ENCODE measurements at regions of chr19 and their contacts with region 1.

Region 1: GRCh38 chr19:36378625-36379509 is at the start of gene ZFP14:
- DNase-seq: peak; percentile 91 to 97
- ATAC-seq: peak; percentile 98
- H3K4me3 ChIP-seq: peak within 1 kb of the TSS; percentile 81
- H3K4me3 Mint-ChIP-seq: peak within 1 kb of the TSS; percentile 88
- H3K27ac ChIP-seq: peak within 1 kb of the TSS; percentile 89
- H3K27ac Mint-ChIP-seq: peak within 1 kb of the TSS; percentile 89 to 98
- H3K4me1 ChIP-seq: peaks cover 10% of the 10 kb centered on the region
- H3K4me1 Mint-ChIP-seq: peaks cover 18 to 23% of the 10 kb centered on the region in 2 donors
- H3K27me3 ChIP-seq: no peaks in the 10 kb centered on the region
- H3K27me3 Mint-ChIP-seq: no peaks in the 10 kb centered on the region
- CTCF ChIP-seq: no peak
- total RNA-seq, gene ZFP14: 7.4 to 8.2 (median 7.8) TPM

Region 2: DNA sequence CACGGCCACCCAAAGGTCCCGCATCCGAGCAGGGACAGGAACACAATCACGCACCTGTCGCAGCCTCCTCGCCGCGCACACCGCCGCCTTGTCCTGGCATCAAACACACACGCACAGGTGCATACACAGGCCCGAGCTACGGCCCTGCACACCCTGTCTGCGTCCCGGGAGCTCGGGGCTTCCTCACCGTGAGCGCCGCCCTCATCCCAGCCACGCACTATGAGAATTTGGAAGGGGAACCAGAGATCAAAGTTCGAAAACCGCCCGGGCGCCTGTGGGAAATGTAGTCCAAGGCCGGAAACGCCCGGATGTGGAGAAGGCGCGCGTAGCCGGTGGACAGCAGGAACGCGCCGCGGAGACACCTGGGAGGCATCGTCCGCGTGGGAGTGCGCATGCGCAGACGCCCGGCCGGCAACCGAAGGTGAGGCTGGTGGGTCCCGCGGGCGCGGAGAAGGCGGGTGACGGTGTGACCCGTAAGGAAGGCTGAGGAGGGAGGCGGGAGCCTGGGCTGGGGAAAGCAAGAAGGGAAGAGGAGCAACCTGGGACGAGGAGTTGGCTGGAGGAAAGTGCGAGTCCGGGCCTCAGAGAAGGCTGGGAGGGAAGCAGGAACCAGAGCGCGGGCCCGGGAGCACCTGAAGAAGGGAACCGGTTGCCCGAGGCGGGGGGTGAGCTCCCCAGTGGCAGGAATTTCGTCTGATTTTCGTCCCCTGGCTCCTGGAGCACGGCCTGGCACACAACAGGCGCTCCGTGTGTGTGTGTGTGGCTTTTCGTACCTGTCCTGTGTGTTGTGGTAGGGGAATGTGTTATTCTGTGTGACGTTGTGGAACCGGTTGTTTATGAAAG is 308.6 kb after region 1 on chr19 and contains the start of gene ZNF567:
- intact Hi-C with region 1: loop called (anchors 10 kb)
- DNase-seq: peak; percentile 92 to 98
- ATAC-seq: peak; percentile 91 to 96 (median 95)
- H3K4me3 ChIP-seq: peak within 1 kb of the TSS; percentile 90
- H3K4me3 Mint-ChIP-seq: peak within 1 kb of the TSS; percentile 98
- H3K27ac ChIP-seq: peak within 1 kb of the TSS; percentile 80
- H3K27ac Mint-ChIP-seq: peak within 1 kb of the TSS; percentile 93 to 99
- H3K4me1 ChIP-seq: peaks cover 18% of the 10 kb centered on the region
- H3K4me1 Mint-ChIP-seq: peaks cover 28 to 39% of the 10 kb centered on the region in 2 donors
- H3K27me3 ChIP-seq: no peaks in the 10 kb centered on the region
- H3K27me3 Mint-ChIP-seq: no peaks in the 10 kb centered on the region
- CTCF ChIP-seq: no peak
- total RNA-seq, gene ZNF567: 5.6 to 11.8 (median 10.5) TPM

Region 3: GRCh38 chr19:36850559-36851442 is 471.9 kb after region 1 on chr19 and contains the start of gene ZNF345:
- intact Hi-C with region 1: loop called (anchors 1 kb)
- DNase-seq: peak; percentile 73 to 94
- ATAC-seq: peak; percentile 79 to 94 (median 85)
- H3K4me3 ChIP-seq: peak within 1 kb of the TSS; percentile 62
- H3K4me3 Mint-ChIP-seq: no peak within 1 kb of the TSS
- H3K27ac ChIP-seq: peak within 1 kb of the TSS; percentile 85
- H3K27ac Mint-ChIP-seq: no peak within 1 kb of the TSS
- H3K4me1 ChIP-seq: peaks cover 23% of the 10 kb centered on the region
- H3K4me1 Mint-ChIP-seq: peaks cover 0 to 10% of the 10 kb centered on the region in 2 donors
- H3K27me3 ChIP-seq: no peaks in the 10 kb centered on the region
- H3K27me3 Mint-ChIP-seq: no peaks in the 10 kb centered on the region
- CTCF ChIP-seq: no peak
- total RNA-seq, gene ZNF345: 7.1 to 19.5 (median 10.0) TPM

Region 4: DNA sequence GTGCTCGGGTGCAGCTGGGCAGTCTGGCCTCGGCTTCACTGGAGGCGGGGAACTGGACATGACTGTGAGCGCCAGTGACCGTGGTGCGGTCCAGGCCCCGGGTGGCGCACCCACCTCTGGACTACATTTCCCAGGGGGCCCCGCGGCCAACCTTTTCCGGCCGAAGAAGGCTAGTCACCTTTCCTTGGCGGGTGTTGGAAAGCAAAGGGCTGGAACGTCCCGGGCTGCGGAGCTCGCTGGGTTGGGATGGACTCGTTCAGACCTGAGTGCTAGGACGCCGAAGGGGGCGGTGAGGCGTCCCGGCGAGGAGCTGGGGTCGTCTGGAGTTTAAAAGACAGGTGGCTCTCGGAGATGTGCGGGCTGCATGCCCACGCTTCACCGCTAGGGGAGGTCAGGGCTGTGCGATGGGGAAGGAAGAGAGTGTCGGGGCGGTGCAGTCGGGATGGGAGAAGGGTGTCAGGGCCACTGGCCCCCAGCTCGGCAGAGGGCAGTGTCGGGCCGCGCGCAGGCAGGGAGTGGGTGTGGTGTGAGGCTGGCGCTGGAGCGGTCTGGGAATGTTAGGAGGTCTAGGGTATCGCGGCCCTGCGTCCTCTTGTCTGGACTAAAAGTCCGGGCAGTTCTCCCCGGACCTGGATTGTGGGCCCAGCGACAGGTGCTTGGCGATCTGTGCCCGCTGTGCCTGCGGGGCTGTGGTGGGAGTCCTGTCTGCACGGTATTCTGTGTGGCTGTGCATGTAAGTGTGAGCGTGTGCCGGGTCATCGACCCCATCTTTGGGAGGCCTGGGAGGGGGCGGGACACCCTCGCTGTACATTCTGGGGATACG is 594.4 kb after region 1 on chr19:
- intact Hi-C with region 1: loop called (anchors 2 kb)
- DNase-seq: peak; percentile 63 to 91
- ATAC-seq: peak; percentile 88 to 89 (median 89)
- H3K4me3 ChIP-seq: peak overlapping the region; percentile 76
- H3K4me3 Mint-ChIP-seq: peak overlapping the region; percentile 100
- H3K27ac ChIP-seq: peak overlapping the region; percentile 59
- H3K27ac Mint-ChIP-seq: peak overlapping the region; percentile 95 to 99
- H3K4me1 ChIP-seq: peaks cover 17% of the 10 kb centered on the region
- H3K4me1 Mint-ChIP-seq: peaks cover 16 to 20% of the 10 kb centered on the region in 2 donors
- H3K27me3 ChIP-seq: no peaks in the 10 kb centered on the region
- H3K27me3 Mint-ChIP-seq: no peaks in the 10 kb centered on the region
- CTCF ChIP-seq: peak; percentile 45